ENCODE measurements at regions of chr19 and their contacts with region 1.

Region 1: DNA sequence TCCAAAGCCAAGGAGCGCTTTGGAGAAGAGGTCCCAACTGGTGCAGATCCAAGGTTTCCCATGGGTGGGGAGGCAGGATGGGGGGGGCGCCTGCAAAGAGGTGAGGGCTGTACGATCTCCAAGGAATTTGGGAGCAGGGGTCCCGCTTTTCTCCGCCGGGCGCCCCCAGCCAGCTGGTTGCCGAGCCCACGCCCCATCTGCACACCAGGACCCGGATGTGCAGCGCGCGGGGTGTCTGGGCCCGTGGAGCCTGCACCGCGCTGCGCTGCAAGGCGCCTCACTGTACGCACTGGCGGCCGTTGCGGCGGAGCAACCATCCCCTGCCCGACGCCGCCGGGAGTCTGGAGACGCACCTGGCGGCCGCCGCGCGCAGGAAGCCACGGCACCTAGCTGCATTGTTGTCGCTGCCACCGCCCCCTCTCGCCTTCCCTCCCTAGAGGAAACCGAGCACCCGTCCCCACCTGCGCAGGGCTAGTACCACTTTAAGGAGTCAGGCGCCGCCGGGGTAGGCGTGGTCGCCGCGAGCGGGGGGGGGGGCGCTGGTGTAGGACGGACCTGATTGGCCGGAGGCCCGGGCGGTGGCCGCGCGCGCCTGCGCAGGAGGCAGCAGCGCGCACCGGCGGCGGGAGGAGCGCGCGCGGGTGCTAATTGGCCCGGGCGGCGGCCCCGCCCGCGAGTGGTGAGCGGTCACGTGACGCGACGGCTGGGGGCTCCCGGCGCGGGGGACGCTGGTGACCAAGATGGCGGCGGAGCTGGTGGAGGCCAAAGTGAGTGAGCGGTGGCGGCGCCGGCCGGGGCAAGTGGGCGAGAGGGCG is at the start of gene PIAS4:
- DNase-seq: peak; percentile 96 to 97 (median 96)
- ATAC-seq: peak; percentile 92
- H3K4me3 ChIP-seq: peak within 1 kb of the TSS; percentile 76 to 91
- H3K27ac ChIP-seq: peak within 1 kb of the TSS; percentile 81 to 91 (median 90)
- H3K4me1 ChIP-seq: peaks cover 46% of the 10 kb centered on the region
- H3K27me3 ChIP-seq: no peaks in the 10 kb centered on the region
- CTCF ChIP-seq: peak in 3 of 7 experiments; percentile 12 to 21 (median 21)
- POLR2A ChIP-seq: peak; percentile 44 to 77 (median 71)
- total RNA-seq, gene PIAS4: 12.7 to 17.1 TPM

Region 2: DNA sequence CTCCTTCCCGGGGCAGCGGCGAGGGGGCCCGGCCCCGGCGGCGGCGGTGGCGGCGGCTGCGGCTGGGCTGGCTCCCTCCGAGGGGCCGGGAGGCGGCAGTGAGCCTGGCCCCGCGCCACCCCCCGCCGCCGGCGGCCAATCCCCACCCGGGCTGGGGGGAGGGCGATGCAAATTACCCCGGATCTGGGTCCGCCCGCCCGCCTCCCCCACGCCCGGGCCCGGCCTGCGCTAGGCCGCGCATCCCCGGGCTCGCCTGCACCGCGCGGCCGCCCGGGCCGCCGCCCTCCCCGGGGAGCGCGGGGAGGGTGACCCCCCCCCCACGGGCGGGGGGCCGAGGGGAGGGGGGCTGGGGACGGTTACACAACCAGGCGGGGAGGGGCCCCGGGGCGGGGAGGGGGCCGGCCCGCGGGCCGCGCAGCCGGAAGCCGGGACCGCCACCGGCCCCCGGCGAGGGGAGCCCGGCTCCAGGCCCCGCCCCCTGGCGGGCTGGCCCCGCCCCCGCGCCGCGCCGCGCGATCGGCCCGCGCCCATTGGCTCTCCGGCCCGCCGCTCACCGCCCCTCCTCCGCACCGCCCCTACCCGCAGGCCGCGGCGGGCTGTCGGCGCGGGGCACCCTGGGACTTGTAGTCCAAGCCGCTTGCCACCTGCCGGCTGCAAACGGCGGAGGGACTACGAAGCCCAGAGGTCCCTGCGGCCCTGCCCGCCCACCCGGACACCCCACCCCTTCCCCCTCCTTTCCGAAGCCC is 58.4 kb after region 1 on chr19:
- intact Hi-C with region 1: loop called (anchors 5 kb)
- DNase-seq: peak; percentile 97 to 98 (median 97)
- ATAC-seq: peak; percentile 82
- H3K4me3 ChIP-seq: peak overlapping the region; percentile 95 to 97
- H3K27ac ChIP-seq: peak overlapping the region; percentile 93 to 97 (median 96)
- H3K4me1 ChIP-seq: peaks cover 49% of the 10 kb centered on the region
- H3K27me3 ChIP-seq: no peaks in the 10 kb centered on the region
- CTCF ChIP-seq: peak in 2 of 7 experiments; percentile 38 to 39
- POLR2A ChIP-seq: no peak

Region 3: GRCh38 chr19:4182084-4182810 is 175.0 kb after region 1 on chr19 and contains the starts of genes ANKRD24 and SIRT6:
- intact Hi-C with region 1: loop called (anchors 10 kb)
- DNase-seq: peak; percentile 97
- ATAC-seq: peak; percentile 94
- H3K4me3 ChIP-seq: peak within 1 kb of the TSS; percentile 72 to 95
- H3K27ac ChIP-seq: peak within 1 kb of the TSS; percentile 64 to 91 (median 84)
- H3K4me1 ChIP-seq: peaks cover 30% of the 10 kb centered on the region
- H3K27me3 ChIP-seq: no peaks in the 10 kb centered on the region
- CTCF ChIP-seq: no peak
- POLR2A ChIP-seq: peak; percentile 37 to 80 (median 77)
- total RNA-seq, gene ANKRD24: 2.1 to 3.6 TPM
- total RNA-seq, gene SIRT6: 13.2 to 54.1 TPM

Region 4: DNA sequence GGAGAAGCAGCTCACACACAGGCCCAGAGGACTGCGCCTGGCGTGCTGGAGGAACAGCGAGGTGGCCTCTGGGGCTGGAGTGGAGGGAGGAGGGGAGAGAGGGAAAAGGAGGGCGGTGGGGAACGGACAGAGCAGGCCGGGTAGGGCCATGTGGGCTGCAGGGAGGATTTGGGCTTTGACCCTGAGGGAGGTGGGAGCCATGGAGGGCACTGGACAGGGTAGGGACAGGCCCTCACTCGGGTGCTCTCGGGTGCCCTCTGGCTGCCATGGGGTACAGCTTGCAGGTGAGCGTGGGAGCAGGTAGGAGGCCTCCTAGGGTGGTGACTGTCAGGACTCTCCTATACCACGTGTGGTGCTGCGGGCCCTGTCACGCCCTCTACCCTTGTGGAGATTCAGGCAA is 488.2 kb after region 1 on chr19:
- intact Hi-C with region 1: no loop called
- DNase-seq: peak in 1 of 4 donors; percentile 21
- ATAC-seq: no peak
- H3K4me3 ChIP-seq: no peak overlapping the region
- H3K27ac ChIP-seq: no peak overlapping the region
- H3K4me1 ChIP-seq: no peaks in the 10 kb centered on the region
- H3K27me3 ChIP-seq: no peaks in the 10 kb centered on the region
- CTCF ChIP-seq: peak in 3 of 7 experiments; percentile 7 to 24 (median 14)
- POLR2A ChIP-seq: no peak

Measured in body of pancreas (tissue), 4 donors.